AG04449 (cell line): ENCODE measurements at regions of chr2 and their contacts with region 1.

Region 1: GRCh38 chr2:143686585-143687164 is 557.5 kb downstream of the ARHGAP15 start:
- DNase-seq: no peak
- H3K4me3 ChIP-seq: no peak overlapping the region
- CTCF ChIP-seq: peak; percentile 13

Region 2: GRCh38 chr2:143700865-143701264 is 14.2 kb after region 1 on chr2:
- CTCF ChIA-PET with region 1: interaction called, 13 read pairs
- POLR2A ChIA-PET with region 1: no interaction called
- DNase-seq: peak; percentile 16
- H3K4me3 ChIP-seq: no peak overlapping the region
- CTCF ChIP-seq: no peak